CD8-positive, alpha-beta memory T cell (primary cell): ENCODE measurements at regions of chr2 and their contacts with region 1.

Region 1: DNA sequence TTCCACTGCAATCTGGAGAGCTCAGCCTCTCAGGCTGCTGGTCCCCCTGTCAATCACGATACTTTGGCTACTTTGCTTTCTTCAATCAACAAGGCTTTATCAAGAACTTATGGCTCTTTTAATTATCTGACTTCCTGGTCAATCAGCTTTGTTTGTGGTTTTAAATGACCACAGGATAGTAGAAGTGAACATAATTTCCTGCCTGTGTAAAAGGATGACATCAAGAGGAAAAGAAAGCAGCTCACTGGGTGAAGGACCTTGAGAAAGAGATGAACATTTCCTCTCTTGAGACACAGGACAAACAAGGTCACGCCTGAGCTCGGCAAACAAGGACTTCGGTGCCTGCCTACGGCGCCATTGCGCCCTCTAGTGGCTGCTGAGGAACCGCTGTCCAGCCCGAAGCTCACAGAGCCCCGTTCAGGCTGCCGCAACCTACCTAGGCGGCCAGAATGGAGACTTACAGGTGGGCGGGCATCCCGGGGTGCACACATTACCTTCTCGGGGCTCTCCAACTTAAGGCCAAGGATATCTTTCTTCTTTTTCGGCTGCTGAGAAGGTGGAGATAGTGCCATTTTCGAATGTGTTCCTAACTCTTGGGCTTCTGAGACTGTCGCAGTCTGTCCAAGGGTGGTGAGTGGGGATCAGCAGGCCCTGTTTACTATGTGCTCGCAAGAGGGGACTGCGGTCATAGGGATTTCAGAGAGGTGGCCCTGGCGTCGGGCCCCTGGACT is 54.0 kb downstream of the IL1RL2 start:
- DNase-seq: peak; percentile 72 to 89 (median 77)
- H3K4me3 ChIP-seq: no peak overlapping the region
- H3K4me3 Mint-ChIP-seq: peak overlapping the region in 6 of 7 donors; percentile 29 to 69 (median 36)
- H3K27ac ChIP-seq: no peak overlapping the region
- H3K27ac Mint-ChIP-seq: peak overlapping the region in 5 of 8 donors; percentile 38 to 84 (median 60)
- H3K4me1 ChIP-seq: peaks cover 9% of the 10 kb centered on the region
- H3K4me1 Mint-ChIP-seq: peaks cover 16 to 30% (median 26%) of the 10 kb centered on the region in 3 donors
- H3K27me3 ChIP-seq: no peaks in the 10 kb centered on the region
- H3K27me3 Mint-ChIP-seq: peaks cover 0 to 3% of the 10 kb centered on the region in 2 donors

Region 2: DNA sequence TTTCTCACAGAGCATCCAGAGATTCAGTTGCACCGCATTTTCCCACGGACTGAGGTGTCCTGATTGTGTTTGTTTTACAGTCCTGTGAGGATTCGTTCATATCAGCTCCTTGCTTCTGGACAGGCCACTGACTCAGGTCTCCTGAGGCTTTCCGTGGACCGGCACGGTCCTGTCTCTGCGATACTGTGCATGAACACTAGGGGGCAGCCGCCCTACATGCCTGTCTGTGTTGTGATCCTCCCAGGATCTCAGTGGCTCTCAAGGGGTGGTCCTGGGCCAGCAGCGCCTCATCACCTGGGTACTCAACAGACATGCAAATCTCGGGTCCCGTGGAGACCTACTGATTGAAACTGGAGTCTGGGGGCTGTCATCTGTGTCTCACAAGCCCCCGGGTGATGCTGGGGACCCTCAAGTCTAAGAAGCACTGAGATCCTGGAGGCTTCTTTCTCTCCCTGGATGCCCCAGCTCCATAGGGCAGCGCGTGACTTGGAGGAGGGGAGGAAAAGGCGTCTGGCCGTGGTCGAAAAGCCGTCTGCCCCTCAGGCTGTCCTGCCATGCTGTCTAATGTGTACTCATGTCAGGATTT is 220.1 kb before region 1 on chr2:
- CTCF ChIA-PET with region 1: interaction called, 105 read pairs
- POLR2A ChIA-PET with region 1: no interaction called
- DNase-seq: peak; percentile 65 to 85 (median 70)
- H3K4me3 ChIP-seq: no peak overlapping the region
- H3K4me3 Mint-ChIP-seq: no peak overlapping the region
- H3K27ac ChIP-seq: no peak overlapping the region
- H3K27ac Mint-ChIP-seq: no peak overlapping the region
- H3K4me1 ChIP-seq: no peaks in the 10 kb centered on the region
- H3K4me1 Mint-ChIP-seq: peaks cover 0 to 3% (median 0%) of the 10 kb centered on the region in 3 donors
- H3K27me3 ChIP-seq: no peaks in the 10 kb centered on the region
- H3K27me3 Mint-ChIP-seq: peaks cover 4 to 6% of the 10 kb centered on the region in 2 donors

Region 3: GRCh38 chr2:102187496-102188150 is 53.2 kb before region 1 on chr2:
- CTCF ChIA-PET with region 1: interaction called, 21 read pairs
- POLR2A ChIA-PET with region 1: no interaction called
- DNase-seq: peak; percentile 7 to 58 (median 11)
- H3K4me3 ChIP-seq: peak overlapping the region; percentile 42
- H3K4me3 Mint-ChIP-seq: peak overlapping the region; percentile 76 to 90 (median 81)
- H3K27ac ChIP-seq: no peak overlapping the region
- H3K27ac Mint-ChIP-seq: peak overlapping the region in 2 of 8 donors; percentile 56 to 88
- H3K4me1 ChIP-seq: no peaks in the 10 kb centered on the region
- H3K4me1 Mint-ChIP-seq: peaks cover 4 to 14% (median 4%) of the 10 kb centered on the region in 3 donors
- H3K27me3 ChIP-seq: no peaks in the 10 kb centered on the region
- H3K27me3 Mint-ChIP-seq: peaks cover 21 to 39% of the 10 kb centered on the region in 2 donors

Region 4: DNA sequence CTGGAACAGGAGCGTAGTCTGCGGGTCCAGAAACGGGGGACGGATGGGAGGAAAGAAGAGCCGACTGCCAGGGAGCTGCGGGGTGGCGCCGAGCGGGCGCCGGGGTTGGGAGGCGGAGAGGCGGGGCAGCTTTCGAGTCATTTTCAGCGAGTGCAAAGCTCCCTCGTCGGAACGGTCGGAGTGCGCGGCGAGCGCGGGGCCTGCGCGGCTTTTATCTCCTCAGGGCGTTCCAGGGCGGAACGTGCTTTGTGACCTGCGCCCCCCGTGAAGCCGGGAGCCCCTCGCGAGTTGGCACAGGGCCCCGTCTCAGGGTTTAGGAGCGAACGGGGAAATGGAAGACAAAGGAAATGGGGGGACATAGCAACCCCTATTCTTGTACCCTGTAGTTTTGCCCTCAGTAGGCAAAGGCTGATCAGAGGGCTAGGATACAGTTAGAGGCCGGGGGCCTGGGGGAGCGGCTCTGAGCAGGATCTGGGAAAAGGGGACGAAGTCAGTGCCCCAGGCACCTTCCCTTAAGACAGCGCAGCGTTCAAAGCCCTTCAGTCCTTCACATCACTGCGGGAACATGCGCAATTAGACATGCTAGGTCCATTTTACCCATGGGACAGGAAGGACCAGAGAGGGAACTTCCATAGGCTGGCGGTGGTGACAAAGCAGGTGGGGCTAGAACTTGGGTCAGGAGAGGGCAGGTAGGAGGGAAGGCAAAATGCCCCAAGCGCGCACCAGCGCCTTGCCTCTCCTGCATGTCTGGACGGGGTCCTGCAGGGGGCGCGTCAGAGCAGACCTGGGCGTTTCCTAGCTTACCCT is 10.4 kb after region 1 on chr2:
- CTCF ChIA-PET with region 1: interaction called, 36 read pairs
- POLR2A ChIA-PET with region 1: no interaction called
- DNase-seq: peak; percentile 35 to 68 (median 46)
- H3K4me3 ChIP-seq: peak overlapping the region; percentile 72
- H3K4me3 Mint-ChIP-seq: peak overlapping the region; percentile 86 to 95 (median 93)
- H3K27ac ChIP-seq: no peak overlapping the region
- H3K27ac Mint-ChIP-seq: peak overlapping the region in 7 of 8 donors; percentile 12 to 91 (median 87)
- H3K4me1 ChIP-seq: peaks cover 9% of the 10 kb centered on the region
- H3K4me1 Mint-ChIP-seq: peaks cover 34 to 45% (median 40%) of the 10 kb centered on the region in 3 donors
- H3K27me3 ChIP-seq: no peaks in the 10 kb centered on the region
- H3K27me3 Mint-ChIP-seq: peaks cover 3 to 4% of the 10 kb centered on the region in 2 donors

Region 5: GRCh38 chr2:102268510-102269209 is 27.9 kb after region 1 on chr2:
- CTCF ChIA-PET with region 1: interaction called, 10 read pairs
- POLR2A ChIA-PET with region 1: no interaction called
- DNase-seq: no peak
- H3K4me3 ChIP-seq: no peak overlapping the region
- H3K4me3 Mint-ChIP-seq: no peak overlapping the region
- H3K27ac ChIP-seq: no peak overlapping the region
- H3K27ac Mint-ChIP-seq: no peak overlapping the region
- H3K4me1 ChIP-seq: no peaks in the 10 kb centered on the region
- H3K4me1 Mint-ChIP-seq: peaks cover 9 to 32% (median 25%) of the 10 kb centered on the region in 3 donors
- H3K27me3 ChIP-seq: no peaks in the 10 kb centered on the region
- H3K27me3 Mint-ChIP-seq: peaks cover 1 to 16% of the 10 kb centered on the region in 2 donors

Region 6: GRCh38 chr2:102355526-102356380 is 114.9 kb after region 1 on chr2 and contains the start of gene IL18R1:
- CTCF ChIA-PET with region 1: interaction called, 16 read pairs
- POLR2A ChIA-PET with region 1: interaction called, 11 read pairs
- DNase-seq: peak; percentile 60 to 74 (median 68)
- H3K4me3 ChIP-seq: peak within 1 kb of the TSS; percentile 68
- H3K4me3 Mint-ChIP-seq: peak within 1 kb of the TSS; percentile 92 to 100 (median 98)
- H3K27ac ChIP-seq: peak within 1 kb of the TSS; percentile 58
- H3K27ac Mint-ChIP-seq: peak within 1 kb of the TSS; percentile 89 to 99 (median 97)
- H3K4me1 ChIP-seq: peaks cover 10% of the 10 kb centered on the region
- H3K4me1 Mint-ChIP-seq: peaks cover 36 to 52% (median 47%) of the 10 kb centered on the region in 3 donors
- H3K27me3 ChIP-seq: no peaks in the 10 kb centered on the region
- H3K27me3 Mint-ChIP-seq: peaks cover 0 to 2% of the 10 kb centered on the region in 2 donors
- total RNA-seq, gene IL18R1: 17.6 to 17.9 TPM

Region 7: GRCh38 chr2:102449370-102449974 is 208.7 kb after region 1 on chr2:
- CTCF ChIA-PET with region 1: interaction called, 31 read pairs
- POLR2A ChIA-PET with region 1: no interaction called
- DNase-seq: peak; percentile 34 to 67 (median 45)
- H3K4me3 ChIP-seq: no peak overlapping the region
- H3K4me3 Mint-ChIP-seq: no peak overlapping the region
- H3K27ac ChIP-seq: no peak overlapping the region
- H3K27ac Mint-ChIP-seq: peak overlapping the region in 2 of 8 donors; percentile 79 to 86
- H3K4me1 ChIP-seq: no peaks in the 10 kb centered on the region
- H3K4me1 Mint-ChIP-seq: peaks cover 0 to 9% (median 6%) of the 10 kb centered on the region in 3 donors
- H3K27me3 ChIP-seq: no peaks in the 10 kb centered on the region
- H3K27me3 Mint-ChIP-seq: no peaks in the 10 kb centered on the region